ENCODE measurements at regions of chr12 and their contacts with region 1.

Region 1: DNA sequence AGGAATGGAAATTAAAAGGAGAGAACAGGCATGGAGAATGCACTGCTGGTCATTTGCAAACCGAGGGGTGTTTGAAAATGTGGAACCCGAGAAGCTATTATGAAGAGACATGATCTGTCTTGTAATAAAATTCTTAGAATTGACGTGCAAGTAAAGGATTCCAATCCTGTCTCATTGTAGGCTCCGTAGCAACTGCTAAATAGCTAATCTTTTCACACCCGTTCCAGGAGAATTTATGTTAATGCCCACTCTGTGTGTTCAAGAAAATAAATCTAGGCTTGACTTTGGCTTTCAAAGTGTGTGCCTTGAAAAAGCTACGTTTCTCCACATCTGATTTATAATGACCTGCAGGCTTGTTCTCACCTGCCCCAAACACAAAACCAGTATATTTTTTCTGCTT is 380.9 kb downstream of the GLT1D1 start:
- DNase-seq: no peak
- ATAC-seq: no peak
- H3K4me3 ChIP-seq: no peak overlapping the region
- H3K4me3 Mint-ChIP-seq: no peak overlapping the region
- H3K27ac ChIP-seq: no peak overlapping the region
- H3K27ac Mint-ChIP-seq: no peak overlapping the region
- H3K4me1 ChIP-seq: no peaks in the 10 kb centered on the region
- H3K4me1 Mint-ChIP-seq: no peaks in the 10 kb centered on the region
- H3K27me3 ChIP-seq: no peaks in the 10 kb centered on the region
- H3K27me3 Mint-ChIP-seq: no peaks in the 10 kb centered on the region

Region 2: GRCh38 chr12:129127211-129127610 is 107.0 kb before region 1 on chr12:
- CTCF ChIA-PET with region 1: no interaction called
- POLR2A ChIA-PET with region 1: interaction called in 1 of 2 experiments, 12 read pairs
- DNase-seq: no peak
- ATAC-seq: no peak
- H3K4me3 ChIP-seq: no peak overlapping the region
- H3K4me3 Mint-ChIP-seq: no peak overlapping the region
- H3K27ac ChIP-seq: no peak overlapping the region
- H3K27ac Mint-ChIP-seq: no peak overlapping the region
- H3K4me1 ChIP-seq: no peaks in the 10 kb centered on the region
- H3K4me1 Mint-ChIP-seq: no peaks in the 10 kb centered on the region
- H3K27me3 ChIP-seq: no peaks in the 10 kb centered on the region
- H3K27me3 Mint-ChIP-seq: no peaks in the 10 kb centered on the region

Region 3: DNA sequence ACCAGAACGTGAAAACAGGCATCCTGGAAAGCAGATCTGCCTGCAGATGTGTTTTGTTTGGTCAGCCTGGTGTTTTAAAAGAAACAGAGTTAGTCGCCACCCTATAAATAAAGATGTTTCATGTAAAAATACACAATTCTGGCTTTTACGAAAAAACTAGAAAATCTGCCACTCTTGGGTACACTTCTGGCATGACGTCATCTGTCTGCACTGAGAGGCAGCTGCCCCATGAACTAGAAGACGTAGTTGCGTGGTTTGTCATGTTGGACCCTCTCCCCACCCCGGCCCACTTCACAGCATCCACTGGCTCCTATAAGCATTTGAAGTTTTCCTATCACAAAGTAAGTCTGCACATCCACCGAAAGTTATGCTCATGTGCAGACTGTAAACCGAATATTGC is 11.6 kb after region 1 on chr12:
- CTCF ChIA-PET with region 1: no interaction called
- POLR2A ChIA-PET with region 1: no interaction called
- DNase-seq: no peak
- ATAC-seq: no peak
- H3K4me3 ChIP-seq: no peak overlapping the region
- H3K4me3 Mint-ChIP-seq: no peak overlapping the region
- H3K27ac ChIP-seq: no peak overlapping the region
- H3K27ac Mint-ChIP-seq: no peak overlapping the region
- H3K4me1 ChIP-seq: no peaks in the 10 kb centered on the region
- H3K4me1 Mint-ChIP-seq: no peaks in the 10 kb centered on the region
- H3K27me3 ChIP-seq: no peaks in the 10 kb centered on the region
- H3K27me3 Mint-ChIP-seq: no peaks in the 10 kb centered on the region

Measured in T-cell (primary cell).